Activated CD4-positive, alpha-beta T cell treated with anti-CD3 and anti-CD28 coated beads, Interleukin-2, amount 10 ng/mL, durations not matched to agents 24 days and 14 days (primary cell): ENCODE measurements at regions of chr7 and their contacts with region 1.

Region 1: DNA sequence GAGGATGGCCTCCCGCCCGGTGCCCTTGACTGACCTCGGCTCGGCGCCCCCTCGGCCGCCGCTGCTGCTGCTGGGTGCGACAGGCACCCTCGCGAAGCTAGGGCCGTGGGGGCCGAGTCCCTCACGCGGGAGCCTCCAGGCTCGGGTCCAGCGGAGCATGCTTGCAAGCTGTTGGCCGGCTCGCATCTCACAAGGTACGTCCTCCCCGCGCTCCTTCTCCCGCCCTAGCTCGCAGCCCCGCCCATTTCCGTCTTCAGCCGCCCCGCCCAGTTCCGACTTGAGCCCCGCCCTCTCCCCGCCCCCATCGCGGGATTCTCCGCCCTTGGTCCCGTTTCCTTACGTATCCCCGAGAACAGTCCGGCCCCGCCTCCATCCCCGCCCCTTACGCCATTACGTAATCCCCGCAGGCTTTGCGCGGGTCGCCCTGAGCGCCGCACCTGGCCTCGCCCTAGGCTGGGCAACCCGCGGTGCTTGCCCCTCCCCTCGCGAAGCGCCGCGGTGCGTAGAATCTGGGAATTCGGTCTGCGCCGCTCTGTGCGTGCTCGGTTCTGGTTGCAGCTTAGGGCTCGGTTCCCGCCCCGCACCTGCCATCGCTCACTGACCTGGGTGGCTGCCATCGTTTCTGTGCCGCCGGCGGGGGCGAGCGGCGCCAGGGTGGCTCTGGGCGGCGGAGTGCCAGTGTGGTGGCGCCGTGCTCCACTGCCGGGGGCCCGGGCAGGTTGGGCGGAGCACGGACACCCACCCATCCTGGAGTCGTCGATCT is at the start of gene ABHD11:
- DNase-seq: peak; percentile 99
- H3K4me3 Mint-ChIP-seq: peak within 1 kb of the TSS; percentile 96
- H3K27ac Mint-ChIP-seq: peak within 1 kb of the TSS; percentile 96
- H3K4me1 Mint-ChIP-seq: peaks cover 11% of the 10 kb centered on the region
- H3K27me3 Mint-ChIP-seq: peaks cover 3% of the 10 kb centered on the region
- total RNA-seq, gene ABHD11: 20.8 and 23.0 TPM in 2 replicates

Region 2: DNA sequence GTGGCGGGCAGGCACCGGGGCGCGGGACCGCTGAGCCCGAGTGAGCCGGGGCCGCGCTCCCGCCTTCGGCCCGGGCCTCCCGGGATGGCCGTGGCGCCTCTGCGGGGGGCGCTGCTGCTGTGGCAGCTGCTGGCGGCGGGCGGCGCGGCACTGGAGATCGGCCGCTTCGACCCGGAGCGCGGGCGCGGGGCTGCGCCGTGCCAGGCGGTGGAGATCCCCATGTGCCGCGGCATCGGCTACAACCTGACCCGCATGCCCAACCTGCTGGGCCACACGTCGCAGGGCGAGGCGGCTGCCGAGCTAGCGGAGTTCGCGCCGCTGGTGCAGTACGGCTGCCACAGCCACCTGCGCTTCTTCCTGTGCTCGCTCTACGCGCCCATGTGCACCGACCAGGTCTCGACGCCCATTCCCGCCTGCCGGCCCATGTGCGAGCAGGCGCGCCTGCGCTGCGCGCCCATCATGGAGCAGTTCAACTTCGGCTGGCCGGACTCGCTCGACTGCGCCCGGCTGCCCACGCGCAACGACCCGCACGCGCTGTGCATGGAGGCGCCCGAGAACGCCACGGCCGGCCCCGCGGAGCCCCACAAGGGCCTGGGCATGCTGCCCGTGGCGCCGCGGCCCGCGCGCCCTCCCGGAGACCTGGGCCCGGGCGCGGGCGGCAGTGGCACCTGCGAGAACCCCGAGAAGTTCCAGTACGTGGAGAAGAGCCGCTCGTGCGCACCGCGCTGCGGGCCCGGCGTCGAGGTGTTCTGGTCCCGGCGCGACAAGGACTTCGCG is 304.7 kb before region 1 on chr7:
- intact Hi-C with region 1: loop called (anchors 5 kb)
- DNase-seq: no peak
- H3K4me3 Mint-ChIP-seq: peak overlapping the region; percentile 37
- H3K27ac Mint-ChIP-seq: no peak overlapping the region
- H3K4me1 Mint-ChIP-seq: peaks cover 2% of the 10 kb centered on the region
- H3K27me3 Mint-ChIP-seq: peaks cover 6% of the 10 kb centered on the region

Region 3: GRCh38 chr7:73557108-73557396 is 181.7 kb before region 1 on chr7:
- intact Hi-C with region 1: loop called (anchors 1 kb)
- DNase-seq: peak; percentile 98
- H3K4me3 Mint-ChIP-seq: peak overlapping the region; percentile 89
- H3K27ac Mint-ChIP-seq: peak overlapping the region; percentile 95
- H3K4me1 Mint-ChIP-seq: peaks cover 32% of the 10 kb centered on the region
- H3K27me3 Mint-ChIP-seq: no peaks in the 10 kb centered on the region

Region 4: DNA sequence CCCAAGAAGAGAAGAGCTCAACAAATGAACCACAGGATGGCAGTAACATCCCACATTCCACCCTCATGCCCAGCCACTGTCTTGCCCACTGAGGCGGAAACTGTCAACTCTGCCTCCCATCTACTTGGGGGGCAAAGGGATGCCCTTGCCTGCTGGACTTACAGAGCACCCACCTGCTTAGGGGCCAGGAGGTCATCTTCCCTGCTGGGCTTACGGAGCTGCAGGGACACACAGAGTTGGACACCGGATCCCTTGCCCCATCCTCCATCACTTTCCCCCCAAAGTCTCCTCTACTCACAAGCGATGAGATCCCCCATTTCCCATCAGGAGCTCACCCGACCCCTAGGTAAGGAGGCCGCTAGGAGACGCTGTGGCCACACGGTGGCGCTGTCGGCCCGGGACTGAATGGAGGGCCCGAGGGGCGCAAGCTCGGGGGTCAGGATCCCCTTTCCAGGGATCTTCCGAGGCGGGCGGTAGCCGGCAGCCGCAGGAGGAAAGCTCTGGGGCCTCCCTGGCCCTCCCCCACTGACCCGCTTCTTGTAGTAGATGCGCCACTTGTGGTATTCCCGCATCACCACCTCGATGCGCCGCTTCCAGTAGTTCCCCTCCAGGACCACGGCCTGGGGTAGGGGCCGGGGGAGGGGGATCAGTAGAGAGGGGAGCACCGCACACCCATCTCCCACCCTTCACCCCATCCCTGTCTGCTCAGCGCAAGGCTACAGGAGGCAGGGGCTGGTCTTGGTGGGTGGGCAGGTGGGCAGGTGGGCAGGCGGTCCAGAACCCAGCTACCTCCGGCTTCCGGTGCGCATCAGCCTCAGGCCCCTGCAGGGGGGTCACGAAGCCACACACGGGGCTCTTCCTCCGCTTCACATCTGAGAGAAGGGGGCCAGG is 131.7 kb before region 1 on chr7:
- intact Hi-C with region 1: loop called (anchors 2 kb)
- DNase-seq: peak; percentile 90
- H3K4me3 Mint-ChIP-seq: no peak overlapping the region
- H3K27ac Mint-ChIP-seq: no peak overlapping the region
- H3K4me1 Mint-ChIP-seq: no peaks in the 10 kb centered on the region
- H3K27me3 Mint-ChIP-seq: peaks cover 13% of the 10 kb centered on the region

Region 5: DNA sequence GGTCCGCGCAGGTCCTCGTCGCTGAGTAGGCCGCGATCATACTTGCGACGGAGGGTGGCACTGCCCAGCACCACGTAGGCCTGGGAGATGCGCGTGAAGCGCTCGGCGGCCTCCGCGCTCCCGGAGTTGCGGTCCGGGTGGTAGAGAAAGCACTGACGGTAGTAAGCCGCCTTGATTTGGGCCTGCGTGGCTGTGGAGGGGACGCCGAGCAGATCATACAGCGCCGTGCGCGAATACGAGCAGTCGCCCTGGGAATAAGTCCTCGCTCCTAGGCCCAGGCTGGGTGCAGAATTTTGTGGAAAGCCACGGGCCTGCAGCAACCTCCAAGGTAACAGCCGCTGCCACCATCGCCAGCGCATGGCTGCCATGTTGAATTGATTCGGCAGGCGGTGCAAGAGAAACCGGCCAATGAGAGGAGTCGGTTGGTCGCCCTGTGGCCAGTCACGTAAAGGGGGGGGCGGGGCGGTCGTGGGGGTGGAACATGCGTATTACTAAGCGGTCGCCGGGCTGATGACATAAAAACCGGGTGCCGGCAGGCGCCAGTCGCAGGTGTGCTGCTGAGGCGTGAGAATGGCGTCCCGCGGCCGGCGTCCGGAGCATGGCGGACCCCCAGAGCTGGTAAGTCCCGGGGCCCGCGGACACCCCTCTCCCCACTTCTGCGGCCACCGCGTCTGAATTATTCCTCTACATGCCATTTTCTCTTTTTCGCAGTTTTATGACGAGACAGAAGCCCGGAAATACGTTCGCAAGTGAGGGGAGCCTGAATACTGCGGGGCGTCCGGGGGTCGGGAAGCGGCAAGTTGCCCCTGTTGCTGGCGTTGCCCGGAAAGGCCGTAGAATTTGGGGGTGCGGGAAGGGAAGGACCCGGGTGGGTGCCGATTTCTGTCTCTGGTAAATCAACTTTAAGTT is 55.5 kb before region 1 on chr7 and contains the starts of genes BUD23 and DNAJC30:
- intact Hi-C with region 1: loop called (anchors 1 kb)
- DNase-seq: peak; percentile 97
- H3K4me3 Mint-ChIP-seq: peak within 1 kb of the TSS; percentile 96
- H3K27ac Mint-ChIP-seq: peak within 1 kb of the TSS; percentile 98
- H3K4me1 Mint-ChIP-seq: peaks cover 23% of the 10 kb centered on the region
- H3K27me3 Mint-ChIP-seq: no peaks in the 10 kb centered on the region
- total RNA-seq, gene BUD23: 133 TPM in 2 replicates
- total RNA-seq, gene DNAJC30: 9.4 and 10.9 TPM in 2 replicates

Region 6: GRCh38 chr7:73851410-73852234 is 112.8 kb after region 1 on chr7:
- intact Hi-C with region 1: loop called (anchors 1 kb)
- DNase-seq: peak; percentile 75
- H3K4me3 Mint-ChIP-seq: peak overlapping the region; percentile 14
- H3K27ac Mint-ChIP-seq: peak overlapping the region; percentile 64
- H3K4me1 Mint-ChIP-seq: peaks cover 24% of the 10 kb centered on the region
- H3K27me3 Mint-ChIP-seq: peaks cover 26% of the 10 kb centered on the region

Region 7: GRCh38 chr7:74216361-74216761 is 477.6 kb after region 1 on chr7:
- intact Hi-C with region 1: no loop called
- DNase-seq: no peak
- H3K4me3 Mint-ChIP-seq: peak overlapping the region; percentile 70
- H3K27ac Mint-ChIP-seq: peak overlapping the region; percentile 84
- H3K4me1 Mint-ChIP-seq: peaks cover 25% of the 10 kb centered on the region
- H3K27me3 Mint-ChIP-seq: no peaks in the 10 kb centered on the region